Activated naive CD4-positive, alpha-beta T cell treated with anti-CD3 and anti-CD28 coated beads for 36 hours (primary cell): ENCODE measurements at regions of chr3 and their contacts with region 1.

Region 1: DNA sequence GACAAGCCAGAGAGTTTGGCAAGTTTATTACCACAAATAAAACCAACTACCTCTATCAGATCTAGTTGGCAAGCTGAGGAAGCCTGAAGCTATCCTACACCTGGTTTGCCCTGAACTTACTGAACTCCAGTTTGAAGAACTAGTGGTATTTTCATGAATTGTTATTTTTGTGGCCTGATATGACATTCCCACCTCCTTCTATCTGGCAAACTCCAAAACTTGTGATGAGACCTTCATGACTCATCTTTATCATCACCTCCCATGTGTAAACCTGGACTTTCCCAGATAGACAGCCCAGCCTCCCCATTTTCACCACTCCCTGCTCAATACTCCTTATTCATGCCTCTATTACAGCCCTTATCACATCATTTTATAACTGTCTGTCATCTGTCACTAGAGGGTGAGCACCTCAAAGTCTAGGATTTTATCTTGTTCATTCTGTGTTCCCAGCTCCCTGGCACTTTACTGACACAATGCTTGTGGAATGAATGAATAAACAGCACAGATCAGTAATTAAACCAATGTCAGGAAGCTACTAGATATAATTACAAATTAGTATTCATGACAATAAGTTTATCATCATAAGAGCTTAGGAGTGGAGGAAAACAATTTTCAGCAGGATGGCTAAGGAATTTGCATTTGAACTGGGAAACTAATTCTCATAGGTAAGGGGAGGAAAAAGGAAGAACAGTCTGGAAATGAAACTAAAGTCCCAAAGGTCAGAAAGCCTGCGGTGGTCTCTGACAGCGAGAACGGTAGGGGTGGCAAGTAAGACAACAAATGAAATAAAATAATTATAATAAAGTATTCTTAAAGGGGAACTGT is 13.2 kb upstream of the TRANK1 start:
- DNase-seq: peak; percentile 18
- H3K4me3 Mint-ChIP-seq: no peak overlapping the region
- H3K27ac Mint-ChIP-seq: no peak overlapping the region
- H3K4me1 Mint-ChIP-seq: peaks cover 17% of the 10 kb centered on the region
- H3K27me3 Mint-ChIP-seq: no peaks in the 10 kb centered on the region

Region 2: DNA sequence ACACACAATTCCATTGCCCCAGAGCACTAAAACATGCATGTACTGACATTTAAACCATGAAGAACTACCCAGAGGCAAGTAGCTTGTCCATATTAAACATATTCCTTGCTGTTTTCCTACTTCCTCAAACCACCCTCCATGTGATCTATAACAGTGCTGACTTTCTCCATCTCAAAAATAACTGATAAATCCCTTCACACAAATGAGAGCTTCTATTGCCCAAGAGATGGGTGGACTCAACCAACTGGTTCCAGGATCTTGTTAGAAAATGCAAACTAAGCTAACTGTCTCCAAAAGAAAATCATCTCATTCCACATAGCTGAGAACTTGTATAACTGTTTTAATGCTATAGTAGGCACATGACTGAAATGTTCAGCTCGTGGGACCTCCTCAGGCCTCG is 223.3 kb before region 1 on chr3:
- CTCF ChIA-PET with region 1: interaction called, 29 read pairs
- intact Hi-C with region 1: loop called (anchors 1 kb)
- DNase-seq: no peak
- H3K4me3 Mint-ChIP-seq: no peak overlapping the region
- H3K27ac Mint-ChIP-seq: no peak overlapping the region
- H3K4me1 Mint-ChIP-seq: no peaks in the 10 kb centered on the region
- H3K27me3 Mint-ChIP-seq: no peaks in the 10 kb centered on the region

Region 3: GRCh38 chr3:36843065-36844051 is 114.7 kb before region 1 on chr3:
- CTCF ChIA-PET with region 1: interaction called, 27 read pairs
- intact Hi-C with region 1: loop called (anchors 1 kb)
- DNase-seq: peak; percentile 91
- H3K4me3 Mint-ChIP-seq: no peak overlapping the region
- H3K27ac Mint-ChIP-seq: peak overlapping the region; percentile 2
- H3K4me1 Mint-ChIP-seq: peaks cover 17% of the 10 kb centered on the region
- H3K27me3 Mint-ChIP-seq: no peaks in the 10 kb centered on the region

Region 4: DNA sequence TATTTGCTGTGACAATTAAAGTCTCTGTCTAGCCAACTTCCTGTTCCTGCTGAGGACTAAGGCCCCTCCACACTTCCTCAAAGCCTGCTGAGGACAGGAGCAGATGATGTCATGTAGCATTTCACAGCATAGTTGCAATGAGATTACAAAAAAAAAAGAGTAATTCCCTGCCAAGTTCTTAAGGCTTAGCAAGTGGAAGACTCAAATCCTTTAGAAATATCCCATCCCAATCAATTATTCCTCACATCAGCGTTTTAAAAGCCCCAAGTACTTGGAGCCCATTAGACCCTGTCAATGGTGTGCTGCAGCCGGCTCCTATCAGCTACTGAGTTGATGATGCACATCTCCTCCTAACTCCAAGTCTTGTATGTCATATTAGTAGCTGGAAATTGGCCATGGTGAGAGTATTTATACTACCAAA is 64.9 kb before region 1 on chr3:
- CTCF ChIA-PET with region 1: interaction called, 18 read pairs
- intact Hi-C with region 1: no loop called
- DNase-seq: peak; percentile 55
- H3K4me3 Mint-ChIP-seq: no peak overlapping the region
- H3K27ac Mint-ChIP-seq: peak overlapping the region; percentile 72
- H3K4me1 Mint-ChIP-seq: peaks cover 41% of the 10 kb centered on the region
- H3K27me3 Mint-ChIP-seq: no peaks in the 10 kb centered on the region

Region 5: GRCh38 chr3:36944012-36944640 is 13.9 kb before region 1 on chr3:
- CTCF ChIA-PET with region 1: interaction called, 13 read pairs
- intact Hi-C with region 1: loop called (anchors 2 kb)
- DNase-seq: peak; percentile 53
- H3K4me3 Mint-ChIP-seq: peak overlapping the region; percentile 78
- H3K27ac Mint-ChIP-seq: no peak overlapping the region
- H3K4me1 Mint-ChIP-seq: peaks cover 10% of the 10 kb centered on the region
- H3K27me3 Mint-ChIP-seq: no peaks in the 10 kb centered on the region